ENCODE measurements at regions of chr7 and their contacts with region 1.

Region 1: GRCh38 chr7:44606450-44607254 is at the start of gene OGDH:
- DNase-seq: peak; percentile 99
- ATAC-seq: peak; percentile 99
- total RNA-seq, gene OGDH: 343 to 358 TPM

Region 2: DNA sequence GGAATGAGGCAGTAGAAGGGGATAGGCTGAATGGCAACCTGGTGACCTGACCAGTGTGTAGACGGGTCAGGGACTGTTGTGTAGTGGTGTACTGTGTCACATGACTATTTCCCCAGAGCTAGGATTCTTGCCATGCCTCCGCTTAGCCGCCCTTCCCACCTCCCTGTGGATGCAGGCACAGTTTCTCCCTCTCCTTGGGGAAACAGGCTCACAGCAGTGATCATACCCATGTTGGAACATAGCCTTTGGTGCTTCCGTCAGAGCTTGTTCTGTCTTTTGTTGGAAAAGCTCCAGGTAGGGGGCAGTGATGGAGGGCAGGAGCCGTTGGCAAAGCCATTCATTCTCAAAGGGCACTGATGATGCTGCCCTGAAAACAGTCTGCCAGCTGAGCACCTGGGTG is 44.1 kb after region 1 on chr7:
- intact Hi-C with region 1: loop called in 1 of 2 experiments (anchors 5 kb)
- DNase-seq: peak; percentile 33
- ATAC-seq: peak; percentile 77 to 85

Region 3: DNA sequence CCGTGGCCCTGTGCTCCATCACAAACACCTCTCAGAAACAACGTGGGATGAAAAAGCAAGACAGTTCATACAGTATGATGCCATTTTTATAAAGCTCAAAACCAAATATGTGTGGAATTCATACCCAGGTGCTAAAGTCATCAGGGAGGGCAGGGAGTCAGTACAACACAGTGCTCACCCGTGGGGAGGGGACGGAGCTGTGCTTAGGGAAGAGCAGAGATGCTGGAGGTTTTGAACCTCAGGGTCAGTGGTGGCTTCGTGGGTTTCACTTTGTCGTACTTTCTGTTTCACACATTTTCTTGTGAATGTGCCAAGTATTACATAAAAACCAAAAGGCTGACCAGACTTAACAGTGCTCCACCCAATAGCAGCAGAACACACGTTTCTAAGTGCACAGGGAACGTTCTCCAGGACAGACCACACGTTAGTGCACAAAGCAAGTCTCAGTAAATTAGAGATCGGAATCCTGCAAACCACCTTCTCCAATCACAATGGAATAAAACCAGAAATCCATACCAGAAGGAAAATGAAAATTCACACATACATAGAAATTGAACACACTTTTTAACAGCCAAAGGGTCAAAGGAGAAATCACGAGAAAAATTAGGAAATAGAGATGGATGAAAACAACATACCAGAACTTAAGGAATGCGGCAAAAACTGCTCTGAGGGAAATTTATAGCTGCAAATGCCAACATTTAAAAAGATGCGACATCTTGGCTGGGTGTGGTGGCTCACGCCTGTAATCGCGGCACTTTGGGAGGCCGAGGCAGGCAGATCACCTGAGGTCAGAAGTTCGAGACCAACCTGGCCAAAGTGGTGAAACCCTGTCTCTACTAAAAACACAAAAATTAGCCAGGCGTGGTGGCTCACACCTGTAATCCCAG is 163.4 kb after region 1 on chr7:
- intact Hi-C with region 1: loop called in 1 of 2 experiments (anchors 10 kb)
- DNase-seq: no peak
- ATAC-seq: peak; percentile 29 to 36